ENCODE measurements at regions of chr9 and their contacts with region 1.

Region 1: GRCh38 chr9:128339771-128340690 is at the start of gene SLC27A4:
- DNase-seq: peak; percentile 88
- ATAC-seq: peak; percentile 93
- H3K4me3 ChIP-seq: peak within 1 kb of the TSS; percentile 69 to 80 (median 70)
- H3K4me3 Mint-ChIP-seq: peak within 1 kb of the TSS; percentile 98
- H3K27ac ChIP-seq: peak within 1 kb of the TSS; percentile 7 to 48
- H3K27ac Mint-ChIP-seq: peak within 1 kb of the TSS; percentile 91
- H3K4me1 ChIP-seq: peaks cover 11 to 15% of the 10 kb centered on the region in 2 donors
- H3K4me1 Mint-ChIP-seq: peaks cover 9% of the 10 kb centered on the region
- H3K27me3 ChIP-seq: no peaks in the 10 kb centered on the region
- H3K27me3 Mint-ChIP-seq: no peaks in the 10 kb centered on the region
- CTCF ChIP-seq: no peak
- total RNA-seq, gene SLC27A4: 12.0 and 12.9 TPM in 2 replicates

Region 2: DNA sequence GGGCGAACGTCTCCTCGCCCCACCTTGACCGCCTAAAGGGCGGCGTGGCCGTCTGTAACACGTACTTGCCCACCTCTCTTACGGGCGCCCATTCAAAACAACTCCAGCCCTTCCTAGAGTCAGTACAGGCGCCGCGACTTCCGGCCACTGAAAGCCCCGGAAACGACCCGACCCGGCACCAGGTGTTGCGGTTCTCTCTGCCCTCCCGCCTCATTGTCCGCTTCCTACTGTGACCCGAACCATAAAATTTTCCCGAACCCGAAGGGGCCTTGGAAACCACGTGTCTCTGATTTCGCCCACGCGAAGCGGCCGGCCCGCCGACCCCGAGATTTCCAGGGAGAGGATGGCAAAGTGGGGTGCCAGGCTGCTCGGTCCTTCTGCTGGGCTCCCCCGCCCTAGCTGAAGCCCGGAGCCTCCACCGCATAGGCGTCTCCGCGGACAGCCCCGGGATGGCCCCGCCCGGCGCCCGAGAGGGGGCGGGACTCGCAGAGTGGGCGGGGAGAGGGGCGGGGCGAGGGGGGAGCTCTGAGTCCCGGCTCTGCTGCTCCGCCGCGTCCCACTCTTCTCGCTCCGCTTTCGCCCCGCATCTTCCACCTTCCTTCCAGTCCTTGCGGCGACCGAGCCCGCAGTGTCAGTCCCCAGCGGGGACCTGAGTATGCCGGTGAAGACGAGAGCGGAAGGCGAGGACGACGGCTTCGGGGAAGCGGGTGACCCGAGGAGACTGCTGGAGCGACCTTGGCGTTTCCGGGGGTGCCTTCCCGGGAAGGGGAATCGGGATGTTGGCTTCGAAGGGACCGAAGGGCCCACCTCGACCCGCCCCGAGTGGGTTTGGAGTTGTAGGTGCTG is 211.8 kb before region 1 on chr9:
- CTCF ChIA-PET with region 1: no interaction called
- POLR2A ChIA-PET with region 1: no interaction called
- intact Hi-C with region 1: loop called (anchors 5 kb)
- DNase-seq: peak; percentile 97
- ATAC-seq: peak; percentile 78
- H3K4me3 ChIP-seq: peak overlapping the region; percentile 58 to 97 (median 83)
- H3K4me3 Mint-ChIP-seq: peak overlapping the region; percentile 95
- H3K27ac ChIP-seq: peak overlapping the region; percentile 93 to 99
- H3K27ac Mint-ChIP-seq: peak overlapping the region; percentile 99
- H3K4me1 ChIP-seq: peaks cover 26 to 34% of the 10 kb centered on the region in 2 donors
- H3K4me1 Mint-ChIP-seq: peaks cover 35% of the 10 kb centered on the region
- H3K27me3 ChIP-seq: peaks cover 0 to 6% (median 0%) of the 10 kb centered on the region in 4 experiments
- H3K27me3 Mint-ChIP-seq: peaks cover 7% of the 10 kb centered on the region
- CTCF ChIP-seq: no peak

Region 3: DNA sequence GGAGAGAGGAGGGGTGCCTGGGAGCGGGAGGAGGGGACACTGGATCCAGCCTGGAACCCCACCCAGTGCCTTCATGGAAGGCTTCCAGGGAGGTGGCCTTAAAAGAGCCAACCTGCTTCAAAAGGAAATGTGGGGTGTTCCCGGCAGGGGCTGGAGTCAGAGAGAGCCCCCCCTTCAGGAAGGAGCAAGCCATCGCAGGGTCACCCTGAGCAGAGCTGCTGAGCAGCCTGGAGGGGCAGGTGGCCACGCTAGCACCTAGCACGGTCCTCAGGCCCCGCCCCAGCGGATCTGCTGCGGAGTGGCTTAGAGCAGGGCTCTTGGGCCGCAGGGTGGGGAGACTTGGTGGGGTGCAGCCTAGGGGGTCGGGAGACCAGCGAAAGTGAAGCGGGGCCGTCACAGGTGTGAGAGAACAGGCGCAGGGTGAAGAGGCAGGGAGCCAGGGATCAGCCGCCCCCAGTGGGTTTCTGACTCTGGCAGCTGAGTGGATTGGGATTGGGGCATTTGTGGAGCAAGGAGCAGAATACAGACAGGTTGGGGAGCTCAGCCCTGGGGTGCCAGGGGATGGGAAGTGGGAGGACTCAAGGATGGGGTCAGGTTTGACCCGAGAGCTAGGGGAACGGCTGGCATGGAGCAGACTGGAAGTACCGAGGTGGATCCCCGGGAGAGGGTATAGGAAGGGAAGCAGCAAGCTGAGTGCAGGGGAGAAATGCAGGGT is 189.3 kb before region 1 on chr9:
- CTCF ChIA-PET with region 1: no interaction called
- POLR2A ChIA-PET with region 1: no interaction called
- intact Hi-C with region 1: no loop called
- DNase-seq: no peak
- ATAC-seq: peak; percentile 41
- H3K4me3 ChIP-seq: no peak overlapping the region
- H3K4me3 Mint-ChIP-seq: no peak overlapping the region
- H3K27ac ChIP-seq: no peak overlapping the region
- H3K27ac Mint-ChIP-seq: peak overlapping the region; percentile 37
- H3K4me1 ChIP-seq: no peaks in the 10 kb centered on the region
- H3K4me1 Mint-ChIP-seq: no peaks in the 10 kb centered on the region
- H3K27me3 ChIP-seq: no peaks in the 10 kb centered on the region
- H3K27me3 Mint-ChIP-seq: peaks cover 7% of the 10 kb centered on the region
- CTCF ChIP-seq: peak; percentile 20

Region 4: GRCh38 chr9:128191406-128192046 is 148.5 kb before region 1 on chr9 and contains the start of gene CIZ1:
- CTCF ChIA-PET with region 1: interaction called, 4 read pairs
- POLR2A ChIA-PET with region 1: no interaction called
- intact Hi-C with region 1: loop called (anchors 1 kb)
- DNase-seq: peak; percentile 88
- ATAC-seq: peak; percentile 90
- H3K4me3 ChIP-seq: peak within 1 kb of the TSS; percentile 26 to 82 (median 73)
- H3K4me3 Mint-ChIP-seq: peak within 1 kb of the TSS; percentile 94
- H3K27ac ChIP-seq: peak within 1 kb of the TSS; percentile 44 to 76
- H3K27ac Mint-ChIP-seq: peak within 1 kb of the TSS; percentile 92
- H3K4me1 ChIP-seq: peaks cover 12 to 24% of the 10 kb centered on the region in 2 donors
- H3K4me1 Mint-ChIP-seq: peaks cover 29% of the 10 kb centered on the region
- H3K27me3 ChIP-seq: no peaks in the 10 kb centered on the region
- H3K27me3 Mint-ChIP-seq: no peaks in the 10 kb centered on the region
- CTCF ChIP-seq: peak; percentile 84
- total RNA-seq, gene CIZ1: 160 and 169 TPM in 2 replicates

Region 5: GRCh38 chr9:128296337-128297220 is 43.5 kb before region 1 on chr9:
- CTCF ChIA-PET with region 1: interaction called, 13 read pairs
- POLR2A ChIA-PET with region 1: no interaction called
- intact Hi-C with region 1: loop called (anchors 1 kb)
- DNase-seq: no peak
- ATAC-seq: no peak
- H3K4me3 ChIP-seq: no peak overlapping the region
- H3K4me3 Mint-ChIP-seq: no peak overlapping the region
- H3K27ac ChIP-seq: no peak overlapping the region
- H3K27ac Mint-ChIP-seq: no peak overlapping the region
- H3K4me1 ChIP-seq: no peaks in the 10 kb centered on the region
- H3K4me1 Mint-ChIP-seq: no peaks in the 10 kb centered on the region
- H3K27me3 ChIP-seq: no peaks in the 10 kb centered on the region
- H3K27me3 Mint-ChIP-seq: no peaks in the 10 kb centered on the region
- CTCF ChIP-seq: no peak

Region 6: DNA sequence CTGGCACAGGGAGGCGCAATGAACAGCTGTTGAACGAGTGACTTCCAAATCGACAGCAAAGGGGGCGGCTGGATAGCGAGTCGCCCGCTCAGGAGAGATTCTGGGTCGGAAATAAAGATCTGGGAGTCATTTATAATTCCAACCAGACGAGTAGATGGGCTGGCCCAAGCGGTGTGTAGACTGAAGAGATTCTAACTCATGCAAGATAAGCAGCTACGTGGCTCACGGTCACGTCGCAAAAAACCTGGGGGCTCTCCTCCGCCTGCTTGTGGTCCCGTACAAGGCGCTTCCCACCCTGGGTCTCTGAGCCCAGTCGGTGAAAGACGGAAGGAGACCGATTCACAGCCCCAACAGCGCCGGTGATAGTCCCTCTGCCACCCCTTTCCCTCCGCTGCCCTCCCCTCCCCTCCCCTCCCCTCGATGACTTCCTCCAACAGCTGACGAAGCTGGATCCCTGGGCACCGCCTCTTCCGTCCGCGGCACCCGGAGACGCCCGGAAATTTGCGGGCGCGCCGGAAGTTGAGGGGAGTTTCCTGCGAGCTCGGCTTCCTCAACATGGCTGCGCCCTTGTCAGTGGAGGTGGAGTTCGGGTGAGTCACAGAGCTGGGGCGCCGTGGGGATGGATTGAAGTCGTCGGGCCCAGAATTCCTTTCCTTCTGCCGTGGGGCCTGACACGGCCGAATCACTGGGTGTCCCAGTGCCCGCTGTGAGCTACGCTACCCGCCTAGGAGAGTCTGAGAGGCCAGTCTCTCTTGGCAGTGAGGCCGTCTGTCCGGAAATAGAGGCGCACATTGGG is 31.0 kb after region 1 on chr9 and contains the start of gene URM1:
- CTCF ChIA-PET with region 1: interaction called, 7 read pairs
- POLR2A ChIA-PET with region 1: interaction called, 6 read pairs
- intact Hi-C with region 1: loop called (anchors 1 kb)
- DNase-seq: peak; percentile 96
- ATAC-seq: peak; percentile 94
- H3K4me3 ChIP-seq: peak within 1 kb of the TSS; percentile 86 to 98 (median 90)
- H3K4me3 Mint-ChIP-seq: peak within 1 kb of the TSS; percentile 95
- H3K27ac ChIP-seq: peak within 1 kb of the TSS; percentile 83 to 96
- H3K27ac Mint-ChIP-seq: peak within 1 kb of the TSS; percentile 96
- H3K4me1 ChIP-seq: peaks cover 15 to 23% of the 10 kb centered on the region in 2 donors
- H3K4me1 Mint-ChIP-seq: peaks cover 30% of the 10 kb centered on the region
- H3K27me3 ChIP-seq: no peaks in the 10 kb centered on the region
- H3K27me3 Mint-ChIP-seq: no peaks in the 10 kb centered on the region
- CTCF ChIP-seq: no peak
- total RNA-seq, gene URM1: 35.6 and 43.8 TPM in 2 replicates